Left colon (tissue), 2 donors: ENCODE measurements at regions of chr20 and their contacts with region 1.

Region 1: DNA sequence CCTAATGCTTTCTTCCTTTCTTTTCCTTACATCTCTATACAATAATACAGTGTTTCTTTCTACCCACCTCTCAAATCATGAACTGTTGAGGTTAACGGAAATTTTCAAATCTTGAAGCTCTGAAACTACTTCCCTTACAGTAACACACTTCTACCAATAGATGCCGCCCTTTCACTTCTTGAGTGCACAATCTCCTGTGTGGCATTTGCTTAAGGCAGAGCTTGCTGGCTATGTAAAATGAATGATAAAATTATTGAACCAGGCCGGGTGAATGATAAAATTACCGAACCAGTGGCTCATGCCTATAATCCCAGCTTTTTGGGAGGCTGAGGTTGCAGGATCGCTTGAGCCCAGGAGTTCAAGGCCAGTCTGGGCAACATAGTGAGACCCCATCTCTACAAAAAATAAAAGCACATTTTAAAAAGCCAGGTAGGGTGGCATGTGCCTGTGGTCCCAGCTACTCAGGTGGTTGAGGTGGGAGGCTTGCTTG is 56.8 kb downstream of the KCNS1 start:
- DNase-seq: no peak
- ATAC-seq: peak; percentile 79

Region 2: DNA sequence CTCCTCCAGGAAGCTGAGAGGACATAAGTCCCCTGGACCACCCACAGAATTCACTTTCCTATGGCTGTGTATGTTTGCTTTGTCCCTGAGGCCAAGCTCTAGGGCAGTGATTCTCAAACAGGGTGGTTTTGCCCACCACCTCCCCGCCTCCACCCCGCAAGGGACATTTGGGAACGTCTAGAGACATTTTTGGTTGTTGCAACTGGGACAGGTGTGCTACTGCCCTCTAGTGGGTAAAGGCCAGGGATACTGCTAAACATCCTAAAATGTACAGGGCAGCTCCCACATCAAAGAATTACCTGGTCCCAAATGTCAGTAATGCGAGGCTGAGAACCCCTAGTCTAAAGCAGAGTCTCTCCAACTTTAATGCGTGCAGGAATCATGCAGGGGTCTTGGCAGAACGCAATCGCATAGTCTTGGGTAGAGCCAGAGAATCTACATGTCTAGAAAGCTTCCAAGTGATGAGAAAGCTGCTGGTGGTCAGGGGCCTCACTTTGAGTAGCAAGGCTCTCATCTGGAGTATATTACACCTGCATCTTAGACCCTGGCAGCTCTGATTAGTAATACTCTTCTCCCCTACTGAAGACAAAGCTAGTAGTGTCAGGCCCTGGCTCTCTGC is 51.7 kb after region 1 on chr20:
- intact Hi-C with region 1: loop called (anchors 10 kb)
- DNase-seq: peak; percentile 34 to 54
- ATAC-seq: peak; percentile 65

Region 3: DNA sequence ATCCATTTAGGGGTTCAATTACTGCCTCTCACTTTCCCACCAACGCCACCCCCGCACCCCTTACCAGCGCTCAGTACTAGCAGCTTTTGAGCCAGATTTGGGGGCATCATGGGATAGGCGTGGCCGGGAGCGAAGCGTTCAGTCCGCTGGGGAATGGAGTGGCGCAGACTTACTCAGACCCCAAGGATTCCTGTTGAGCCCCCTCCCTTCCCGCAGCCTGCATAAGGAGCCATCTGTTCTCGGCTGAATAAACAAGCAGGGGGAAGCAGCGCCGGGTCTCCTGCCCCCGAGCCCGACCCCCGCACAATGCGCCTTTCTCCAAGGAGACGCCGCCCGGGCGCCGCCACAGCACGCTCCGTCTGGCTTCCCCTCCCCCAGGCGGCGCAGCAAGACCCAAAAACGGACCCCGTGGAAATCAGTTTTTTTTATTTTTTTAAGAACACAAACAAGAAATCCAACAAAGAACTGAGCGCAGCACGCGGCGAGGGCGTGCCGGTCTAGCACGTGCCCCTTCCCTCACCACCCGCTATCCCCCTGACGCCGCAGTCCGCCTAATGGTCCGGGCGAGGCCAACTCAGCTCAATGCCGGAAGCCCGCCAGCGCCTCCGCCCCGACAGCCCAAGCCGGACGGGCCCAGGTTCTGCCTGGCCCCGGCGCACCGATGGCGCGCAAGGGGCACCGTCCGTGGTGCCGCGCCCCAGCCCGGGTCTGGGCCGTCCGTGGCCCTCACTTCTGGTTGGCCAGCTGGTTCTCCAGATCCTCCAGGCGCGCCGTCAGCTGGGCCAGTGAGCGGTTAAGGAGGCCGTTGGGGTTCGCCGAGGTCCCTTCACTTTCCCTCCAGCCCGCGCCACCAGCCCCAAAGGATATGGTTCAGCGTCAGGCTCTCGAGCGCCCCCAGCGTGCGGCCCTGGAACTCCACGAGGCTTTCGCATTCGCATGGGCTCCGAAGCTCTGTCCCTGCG is 249.2 kb after region 1 on chr20:
- intact Hi-C with region 1: loop called in 1 of 2 experiments (anchors 10 kb)
- DNase-seq: peak; percentile 75 to 90
- ATAC-seq: peak; percentile 86